Left cardiac atrium (tissue), 4 donors: ENCODE measurements at regions of chr1 and their contacts with region 1.

Region 1: GRCh38 chr1:48677306-48678287 is 99.1 kb downstream of the BEND5 start:
- DNase-seq: peak; percentile 68
- ATAC-seq: peak; percentile 64 to 67

Region 2: GRCh38 chr1:48817505-48818114 is 140.0 kb after region 1 on chr1:
- intact Hi-C with region 1: loop called in 1 of 2 experiments (anchors 5 kb)
- DNase-seq: peak; percentile 64
- ATAC-seq: peak; percentile 76 to 84

Region 3: GRCh38 chr1:49136738-49137251 is 459.2 kb after region 1 on chr1:
- intact Hi-C with region 1: no loop called
- DNase-seq: no peak
- ATAC-seq: no peak